Sigmoid colon (tissue), 7 donors: ENCODE measurements at regions of chr5 and their contacts with region 1.

Region 1: DNA sequence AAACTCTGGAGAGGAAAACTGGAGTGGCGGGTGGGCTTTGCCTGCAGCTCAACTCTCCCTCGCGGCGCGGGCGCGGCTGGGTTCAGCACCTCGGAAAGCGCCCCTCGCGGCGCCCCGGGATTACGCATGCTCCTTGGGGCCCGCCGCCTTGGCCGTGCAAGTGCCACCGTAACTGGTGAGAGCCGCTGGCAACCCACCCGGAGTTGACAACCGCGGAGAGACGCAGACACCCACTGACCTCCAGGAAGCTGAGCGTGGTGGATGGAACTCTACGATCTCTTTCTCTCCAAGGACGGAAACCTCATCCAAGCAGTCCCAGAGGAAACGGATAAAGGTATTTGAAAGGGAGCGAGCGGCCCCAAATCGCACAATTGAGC is 194 bp upstream of the RXFP3 start:
- DNase-seq: no peak
- H3K4me3 ChIP-seq: peak overlapping the region in 3 of 4 donors; percentile 7 to 39 (median 29)
- H3K27ac ChIP-seq: no peak overlapping the region
- H3K4me1 ChIP-seq: peaks cover 0 to 19% (median 13%) of the 10 kb centered on the region in 4 donors
- H3K27me3 ChIP-seq: peaks cover 21 to 57% (median 39%) of the 10 kb centered on the region in 3 donors
- CTCF ChIP-seq: peak in 2 of 4 experiments; percentile 21 to 45
- EP300 ChIP-seq: no peak
- POLR2A ChIP-seq: no peak

Region 2: GRCh38 chr5:33649796-33650482 is 286.1 kb before region 1 on chr5:
- intact Hi-C with region 1: loop called (anchors 10 kb)
- DNase-seq: no peak
- H3K4me3 ChIP-seq: no peak overlapping the region
- H3K27ac ChIP-seq: no peak overlapping the region
- H3K4me1 ChIP-seq: no peaks in the 10 kb centered on the region
- H3K27me3 ChIP-seq: no peaks in the 10 kb centered on the region
- CTCF ChIP-seq: no peak
- EP300 ChIP-seq: no peak
- POLR2A ChIP-seq: no peak